ENCODE measurements at regions of chr11 and their contacts with region 1.

Region 1: GRCh38 chr11:56783448-56784041 is 35.0 kb upstream of the OR9G4 start:
- H3K4me3 Mint-ChIP-seq: no peak overlapping the region
- H3K27ac Mint-ChIP-seq: no peak overlapping the region
- H3K4me1 Mint-ChIP-seq: no peaks in the 10 kb centered on the region
- H3K27me3 Mint-ChIP-seq: no peaks in the 10 kb centered on the region

Region 2: DNA sequence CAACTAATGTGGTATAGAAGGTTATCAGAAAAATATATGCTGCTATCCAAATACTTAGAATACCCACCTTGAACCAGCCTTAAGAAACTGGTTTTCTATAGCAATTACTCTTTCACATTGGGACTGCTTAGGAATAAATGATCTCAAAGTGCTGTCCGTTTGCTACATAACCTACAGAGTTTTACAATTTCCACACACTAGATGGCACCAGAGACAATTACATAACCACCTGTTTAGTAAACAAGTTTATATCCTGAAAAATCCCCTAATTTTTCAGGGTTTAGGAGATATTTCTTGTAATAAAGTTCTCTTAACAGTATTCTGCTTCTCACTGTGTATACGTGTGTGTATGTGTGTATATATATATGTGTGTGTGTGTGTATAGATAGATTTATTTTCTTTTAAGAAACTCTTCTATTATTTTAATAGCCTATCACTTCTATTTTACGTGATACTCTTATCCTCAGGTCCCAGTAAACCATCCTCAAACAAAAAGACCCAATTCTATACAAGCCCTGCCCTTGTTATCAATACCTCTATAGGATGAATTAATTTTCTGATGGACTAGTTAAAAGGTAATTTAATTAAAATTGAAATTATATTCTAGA is 840.7 kb before region 1 on chr11:
- intact Hi-C with region 1: loop called (anchors 10 kb)
- H3K4me3 Mint-ChIP-seq: no peak overlapping the region
- H3K27ac Mint-ChIP-seq: no peak overlapping the region
- H3K4me1 Mint-ChIP-seq: no peaks in the 10 kb centered on the region
- H3K27me3 Mint-ChIP-seq: no peaks in the 10 kb centered on the region

Region 3: GRCh38 chr11:56799691-56800210 is 16.2 kb after region 1 on chr11:
- intact Hi-C with region 1: no loop called
- H3K4me3 Mint-ChIP-seq: no peak overlapping the region
- H3K27ac Mint-ChIP-seq: no peak overlapping the region
- H3K4me1 Mint-ChIP-seq: no peaks in the 10 kb centered on the region
- H3K27me3 Mint-ChIP-seq: no peaks in the 10 kb centered on the region

Region 4: DNA sequence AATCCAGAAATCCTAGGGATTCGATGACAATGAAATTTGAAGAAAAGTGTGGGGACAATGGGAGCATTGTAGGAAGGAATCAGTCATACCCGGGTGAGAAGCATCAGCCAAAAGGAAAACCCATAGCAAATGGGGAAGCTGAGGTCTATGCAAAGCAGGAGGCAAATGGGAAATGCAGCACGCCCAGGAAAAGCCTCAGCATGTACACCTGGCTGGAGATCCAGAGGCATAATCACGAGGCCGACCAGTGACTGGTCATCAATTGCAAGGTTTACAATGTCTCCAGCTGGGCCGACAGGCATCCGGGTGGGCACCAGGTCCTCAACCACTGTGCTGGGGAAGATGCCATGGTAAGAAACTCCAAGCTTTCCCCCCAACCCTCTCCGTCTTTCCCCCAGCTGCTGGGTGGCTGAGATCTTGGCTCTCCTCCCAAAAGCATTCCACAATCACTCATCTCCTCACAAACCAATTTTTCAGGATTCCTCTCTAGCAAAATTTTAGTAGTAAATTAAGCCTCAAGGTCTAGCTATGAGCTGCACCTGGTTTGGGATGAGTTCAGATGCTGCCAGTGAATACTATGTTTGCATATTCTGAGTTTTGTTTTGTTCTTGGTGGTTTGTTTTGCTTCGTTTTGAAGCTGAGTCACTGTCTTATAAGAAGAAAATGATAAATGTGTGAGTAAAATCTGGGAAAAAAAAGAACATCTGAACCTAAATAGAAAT is 107.2 kb after region 1 on chr11:
- intact Hi-C with region 1: no loop called
- H3K4me3 Mint-ChIP-seq: no peak overlapping the region
- H3K27ac Mint-ChIP-seq: no peak overlapping the region
- H3K4me1 Mint-ChIP-seq: no peaks in the 10 kb centered on the region
- H3K27me3 Mint-ChIP-seq: no peaks in the 10 kb centered on the region

Region 5: GRCh38 chr11:57167125-57167846 is 383.7 kb after region 1 on chr11:
- intact Hi-C with region 1: no loop called
- H3K4me3 Mint-ChIP-seq: no peak overlapping the region
- H3K27ac Mint-ChIP-seq: no peak overlapping the region
- H3K4me1 Mint-ChIP-seq: peaks cover 5% of the 10 kb centered on the region
- H3K27me3 Mint-ChIP-seq: peaks cover 10% of the 10 kb centered on the region